Colonic mucosa (tissue), 4 donors: ENCODE measurements at regions of chr9 and their contacts with region 1.

Region 1: DNA sequence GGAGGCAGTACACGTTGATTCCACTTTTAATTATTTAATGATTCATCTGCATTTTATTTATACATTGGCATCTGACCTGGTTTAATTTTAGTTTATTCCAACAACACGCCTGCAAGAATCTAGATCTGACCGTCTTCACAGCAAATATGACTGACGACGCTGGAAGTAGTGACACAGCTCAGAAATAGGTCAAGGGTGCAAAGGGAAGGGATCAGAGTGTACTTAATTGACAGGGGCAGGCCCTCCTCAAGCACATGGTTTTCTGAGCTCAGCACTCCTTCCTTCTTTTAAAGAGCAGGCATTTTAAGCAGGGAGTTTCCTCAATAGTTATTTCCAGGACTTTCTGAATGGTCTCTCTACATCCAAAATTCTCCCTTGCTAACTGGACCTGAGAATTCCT is 125.1 kb downstream of the GLIS3 start:
- DNase-seq: no peak
- H3K4me3 ChIP-seq: no peak overlapping the region
- H3K27ac ChIP-seq: no peak overlapping the region
- H3K4me1 ChIP-seq: no peaks in the 10 kb centered on the region
- H3K27me3 ChIP-seq: no peaks in the 10 kb centered on the region
- CTCF ChIP-seq: no peak

Region 2: GRCh38 chr9:4086119-4087090 is 88.4 kb before region 1 on chr9:
- intact Hi-C with region 1: no loop called
- DNase-seq: no peak
- H3K4me3 ChIP-seq: no peak overlapping the region
- H3K27ac ChIP-seq: no peak overlapping the region
- H3K4me1 ChIP-seq: peaks cover 3% of the 10 kb centered on the region
- H3K27me3 ChIP-seq: no peaks in the 10 kb centered on the region
- CTCF ChIP-seq: no peak

Region 3: DNA sequence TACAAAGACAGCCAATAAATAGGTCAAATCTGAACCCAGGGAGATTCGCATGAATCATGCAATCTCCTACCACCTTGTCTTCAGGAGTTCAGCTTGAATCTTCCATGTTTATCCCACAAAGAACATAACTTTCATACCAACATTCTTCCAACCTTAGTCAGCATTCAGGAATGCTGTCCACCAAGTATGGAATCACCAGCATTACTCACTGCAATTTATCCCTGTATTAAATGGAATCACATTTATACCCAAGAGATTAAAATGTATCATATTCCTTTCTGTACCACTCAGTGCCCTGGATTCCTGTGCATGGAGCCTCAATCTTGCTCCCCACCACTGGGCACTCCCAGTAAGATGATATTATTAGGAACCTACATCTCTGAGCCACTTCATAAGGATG is 37.5 kb before region 1 on chr9:
- intact Hi-C with region 1: loop called (anchors 5 kb)
- DNase-seq: no peak
- H3K4me3 ChIP-seq: no peak overlapping the region
- H3K27ac ChIP-seq: no peak overlapping the region
- H3K4me1 ChIP-seq: no peaks in the 10 kb centered on the region
- H3K27me3 ChIP-seq: no peaks in the 10 kb centered on the region
- CTCF ChIP-seq: no peak

Region 4: GRCh38 chr9:4289411-4290380 is 114.9 kb after region 1 on chr9:
- intact Hi-C with region 1: loop called (anchors 10 kb)
- DNase-seq: no peak
- H3K4me3 ChIP-seq: no peak overlapping the region
- H3K27ac ChIP-seq: no peak overlapping the region
- H3K4me1 ChIP-seq: peaks cover 8% of the 10 kb centered on the region
- H3K27me3 ChIP-seq: no peaks in the 10 kb centered on the region
- CTCF ChIP-seq: no peak